Activated CD4-positive, alpha-beta T cell treated with anti-CD3 and anti-CD28 coated beads for 36 hours (primary cell): ENCODE measurements at regions of chr4 and their contacts with region 1.

Region 1: DNA sequence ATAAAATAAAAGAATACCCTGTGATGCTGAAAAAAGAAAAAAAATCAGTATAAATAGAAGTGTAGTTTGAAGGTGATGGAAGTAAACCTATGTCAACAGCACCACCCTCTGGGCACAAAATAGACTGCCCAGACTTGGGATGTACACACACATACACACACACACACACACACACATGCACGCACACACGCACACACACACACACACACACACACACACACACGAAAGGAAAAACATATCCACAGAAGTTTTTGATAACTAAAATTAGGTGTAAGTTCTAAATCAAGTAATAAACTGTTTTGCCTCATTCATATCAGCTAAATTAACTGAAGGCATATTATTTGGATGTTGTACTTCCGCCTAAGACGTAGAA is 40.5 kb downstream of the ANXA5 start:
- DNase-seq: peak; percentile 61
- ATAC-seq: peak; percentile 57
- H3K4me3 Mint-ChIP-seq: no peak overlapping the region
- H3K27ac Mint-ChIP-seq: no peak overlapping the region
- H3K4me1 Mint-ChIP-seq: no peaks in the 10 kb centered on the region
- H3K27me3 Mint-ChIP-seq: peaks cover 3% of the 10 kb centered on the region

Region 2: DNA sequence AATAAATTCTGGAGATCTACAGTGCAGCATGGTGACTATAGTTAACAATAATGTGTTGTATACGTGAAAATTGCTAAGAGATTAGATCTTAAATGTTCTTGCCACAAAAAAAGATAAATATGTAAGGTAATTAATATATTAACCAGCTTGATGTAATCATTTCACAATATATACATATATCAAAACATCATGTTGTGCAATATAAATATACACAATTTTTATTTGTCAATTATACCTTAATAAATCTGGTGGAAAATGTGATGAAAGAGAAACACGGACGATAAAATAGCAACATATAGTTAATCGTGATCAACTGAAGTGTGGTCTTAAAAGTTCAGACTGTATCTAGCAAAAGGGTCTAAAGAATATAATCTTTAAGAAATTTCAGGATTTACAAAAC is 567.4 kb before region 1 on chr4:
- CTCF ChIA-PET with region 1: no interaction called
- POLR2A ChIA-PET with region 1: interaction called, 10 read pairs
- intact Hi-C with region 1: no loop called
- DNase-seq: no peak
- ATAC-seq: no peak
- H3K4me3 Mint-ChIP-seq: no peak overlapping the region
- H3K27ac Mint-ChIP-seq: no peak overlapping the region
- H3K4me1 Mint-ChIP-seq: no peaks in the 10 kb centered on the region
- H3K27me3 Mint-ChIP-seq: no peaks in the 10 kb centered on the region

Region 3: GRCh38 chr4:121370729-121371325 is 285.4 kb before region 1 on chr4:
- CTCF ChIA-PET with region 1: interaction called, 8 read pairs
- POLR2A ChIA-PET with region 1: no interaction called
- intact Hi-C with region 1: loop called (anchors 1 to 5 kb)
- DNase-seq: peak; percentile 64
- ATAC-seq: no peak
- H3K4me3 Mint-ChIP-seq: no peak overlapping the region
- H3K27ac Mint-ChIP-seq: no peak overlapping the region
- H3K4me1 Mint-ChIP-seq: no peaks in the 10 kb centered on the region
- H3K27me3 Mint-ChIP-seq: peaks cover 20% of the 10 kb centered on the region

Region 4: GRCh38 chr4:121462660-121463261 is 193.5 kb before region 1 on chr4:
- CTCF ChIA-PET with region 1: no interaction called
- POLR2A ChIA-PET with region 1: no interaction called
- intact Hi-C with region 1: loop called in 1 of 2 experiments (anchors 2 kb)
- DNase-seq: peak; percentile 38
- ATAC-seq: peak; percentile 47
- H3K4me3 Mint-ChIP-seq: no peak overlapping the region
- H3K27ac Mint-ChIP-seq: no peak overlapping the region
- H3K4me1 Mint-ChIP-seq: no peaks in the 10 kb centered on the region
- H3K27me3 Mint-ChIP-seq: peaks cover 3% of the 10 kb centered on the region

Region 5: DNA sequence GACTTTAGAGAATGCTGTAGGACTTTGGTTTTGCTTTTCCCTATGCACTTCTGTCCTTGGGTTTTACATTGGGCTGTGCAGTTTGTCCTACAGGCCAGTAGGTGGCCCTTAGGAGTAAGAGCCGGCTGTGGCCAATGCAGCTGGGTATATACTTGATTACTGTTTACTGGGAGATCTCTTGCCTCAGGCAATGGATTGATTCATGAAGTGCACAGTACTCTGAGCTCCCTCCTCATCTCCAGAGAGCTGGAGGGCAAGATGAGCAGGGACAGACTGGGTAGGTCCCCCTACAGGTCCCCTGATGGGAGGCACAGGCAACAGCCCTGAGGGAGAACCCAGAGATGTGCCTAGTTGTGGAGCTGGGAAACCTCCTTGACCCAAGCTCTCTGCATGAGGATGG is 171.6 kb before region 1 on chr4:
- CTCF ChIA-PET with region 1: interaction called, 3 read pairs
- POLR2A ChIA-PET with region 1: no interaction called
- intact Hi-C with region 1: loop called (anchors 1 to 10 kb)
- DNase-seq: peak; percentile 18
- ATAC-seq: peak; percentile 66
- H3K4me3 Mint-ChIP-seq: no peak overlapping the region
- H3K27ac Mint-ChIP-seq: no peak overlapping the region
- H3K4me1 Mint-ChIP-seq: no peaks in the 10 kb centered on the region
- H3K27me3 Mint-ChIP-seq: peaks cover 9% of the 10 kb centered on the region